CD4-positive, alpha-beta memory T cell (primary cell): ENCODE measurements at regions of chr6 and their contacts with region 1.

Region 1: GRCh38 chr6:79078075-79079025 is at the start of gene PHIP:
- DNase-seq: peak; percentile 95 to 97 (median 97)
- H3K4me3 ChIP-seq: peak within 1 kb of the TSS; percentile 86 to 89
- H3K4me3 Mint-ChIP-seq: peak within 1 kb of the TSS; percentile 90 to 98 (median 96)
- H3K27ac ChIP-seq: peak within 1 kb of the TSS; percentile 80
- H3K27ac Mint-ChIP-seq: peak within 1 kb of the TSS; percentile 94 to 99 (median 95)
- H3K4me1 ChIP-seq: peaks cover 39% of the 10 kb centered on the region
- H3K4me1 Mint-ChIP-seq: peaks cover 25 to 58% (median 33%) of the 10 kb centered on the region in 4 donors
- H3K27me3 ChIP-seq: no peaks in the 10 kb centered on the region
- H3K27me3 Mint-ChIP-seq: peaks cover 4 to 9% of the 10 kb centered on the region in 2 donors
- total RNA-seq, gene PHIP: 45.2 to 46.8 TPM

Region 2: DNA sequence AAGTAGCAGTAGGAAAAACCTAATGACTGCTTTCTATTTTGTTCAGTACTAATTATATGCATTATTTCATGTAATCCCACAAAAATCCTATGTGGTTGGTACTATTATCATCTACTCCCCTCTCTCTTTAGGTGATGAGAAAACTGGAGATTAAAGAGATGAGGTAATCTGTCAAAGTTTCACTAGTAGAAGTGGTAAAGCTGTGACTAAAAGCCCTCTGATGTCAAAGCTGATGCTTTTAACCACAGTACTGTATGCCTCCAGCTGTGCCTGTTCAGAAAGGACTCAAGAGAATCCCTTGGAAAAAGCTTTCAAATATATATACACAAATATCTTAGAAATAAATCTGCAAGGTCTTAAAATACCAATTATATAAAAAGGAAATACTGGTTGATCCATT is 38.3 kb before region 1 on chr6:
- CTCF ChIA-PET with region 1: interaction called, 6 read pairs
- POLR2A ChIA-PET with region 1: interaction called, 30 read pairs
- intact Hi-C with region 1: loop called (anchors 5 kb)
- DNase-seq: no peak
- H3K4me3 ChIP-seq: no peak overlapping the region
- H3K4me3 Mint-ChIP-seq: no peak overlapping the region
- H3K27ac ChIP-seq: no peak overlapping the region
- H3K27ac Mint-ChIP-seq: no peak overlapping the region
- H3K4me1 ChIP-seq: peaks cover 33% of the 10 kb centered on the region
- H3K4me1 Mint-ChIP-seq: peaks cover 38 to 69% (median 55%) of the 10 kb centered on the region in 4 donors
- H3K27me3 ChIP-seq: no peaks in the 10 kb centered on the region
- H3K27me3 Mint-ChIP-seq: no peaks in the 10 kb centered on the region

Region 3: DNA sequence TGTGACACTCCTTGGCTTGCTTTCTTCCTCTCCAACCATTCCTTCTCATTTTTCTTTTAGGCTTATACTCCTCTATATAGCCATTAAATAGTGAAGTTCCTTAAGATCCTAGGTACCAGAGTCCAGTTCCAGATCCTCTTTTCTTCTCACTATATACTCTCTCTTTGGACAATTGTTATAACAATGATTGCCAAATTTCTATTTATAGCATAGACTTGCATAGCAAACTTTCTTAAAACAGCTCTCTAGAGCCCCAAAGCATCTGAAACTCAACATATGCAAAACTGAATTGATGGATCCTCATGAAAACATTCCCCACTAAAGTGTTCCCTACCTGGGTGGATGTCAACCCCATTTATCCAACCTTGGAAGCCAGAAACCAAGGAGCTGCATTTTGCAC is 13.7 kb before region 1 on chr6:
- CTCF ChIA-PET with region 1: interaction called, 3 read pairs
- POLR2A ChIA-PET with region 1: interaction called, 48 read pairs
- intact Hi-C with region 1: loop called (anchors 1 kb)
- DNase-seq: no peak
- H3K4me3 ChIP-seq: no peak overlapping the region
- H3K4me3 Mint-ChIP-seq: no peak overlapping the region
- H3K27ac ChIP-seq: no peak overlapping the region
- H3K27ac Mint-ChIP-seq: no peak overlapping the region
- H3K4me1 ChIP-seq: peaks cover 19% of the 10 kb centered on the region
- H3K4me1 Mint-ChIP-seq: peaks cover 10 to 21% (median 18%) of the 10 kb centered on the region in 4 donors
- H3K27me3 ChIP-seq: no peaks in the 10 kb centered on the region
- H3K27me3 Mint-ChIP-seq: no peaks in the 10 kb centered on the region

Region 4: GRCh38 chr6:79536954-79537747 is 458.8 kb after region 1 on chr6 and contains the start of gene LCA5:
- CTCF ChIA-PET with region 1: no interaction called
- POLR2A ChIA-PET with region 1: interaction called, 5 read pairs
- intact Hi-C with region 1: loop called (anchors 1 kb)
- DNase-seq: peak; percentile 73 to 85 (median 84)
- H3K4me3 ChIP-seq: peak within 1 kb of the TSS; percentile 25 to 44
- H3K4me3 Mint-ChIP-seq: no peak within 1 kb of the TSS
- H3K27ac ChIP-seq: no peak within 1 kb of the TSS
- H3K27ac Mint-ChIP-seq: no peak within 1 kb of the TSS
- H3K4me1 ChIP-seq: peaks cover 14% of the 10 kb centered on the region
- H3K4me1 Mint-ChIP-seq: peaks cover 0 to 4% (median under 1%) of the 10 kb centered on the region in 4 donors
- H3K27me3 ChIP-seq: no peaks in the 10 kb centered on the region
- H3K27me3 Mint-ChIP-seq: peaks cover 11 to 18% of the 10 kb centered on the region in 2 donors
- total RNA-seq, gene LCA5: 0.22 to 0.23 TPM

Region 5: DNA sequence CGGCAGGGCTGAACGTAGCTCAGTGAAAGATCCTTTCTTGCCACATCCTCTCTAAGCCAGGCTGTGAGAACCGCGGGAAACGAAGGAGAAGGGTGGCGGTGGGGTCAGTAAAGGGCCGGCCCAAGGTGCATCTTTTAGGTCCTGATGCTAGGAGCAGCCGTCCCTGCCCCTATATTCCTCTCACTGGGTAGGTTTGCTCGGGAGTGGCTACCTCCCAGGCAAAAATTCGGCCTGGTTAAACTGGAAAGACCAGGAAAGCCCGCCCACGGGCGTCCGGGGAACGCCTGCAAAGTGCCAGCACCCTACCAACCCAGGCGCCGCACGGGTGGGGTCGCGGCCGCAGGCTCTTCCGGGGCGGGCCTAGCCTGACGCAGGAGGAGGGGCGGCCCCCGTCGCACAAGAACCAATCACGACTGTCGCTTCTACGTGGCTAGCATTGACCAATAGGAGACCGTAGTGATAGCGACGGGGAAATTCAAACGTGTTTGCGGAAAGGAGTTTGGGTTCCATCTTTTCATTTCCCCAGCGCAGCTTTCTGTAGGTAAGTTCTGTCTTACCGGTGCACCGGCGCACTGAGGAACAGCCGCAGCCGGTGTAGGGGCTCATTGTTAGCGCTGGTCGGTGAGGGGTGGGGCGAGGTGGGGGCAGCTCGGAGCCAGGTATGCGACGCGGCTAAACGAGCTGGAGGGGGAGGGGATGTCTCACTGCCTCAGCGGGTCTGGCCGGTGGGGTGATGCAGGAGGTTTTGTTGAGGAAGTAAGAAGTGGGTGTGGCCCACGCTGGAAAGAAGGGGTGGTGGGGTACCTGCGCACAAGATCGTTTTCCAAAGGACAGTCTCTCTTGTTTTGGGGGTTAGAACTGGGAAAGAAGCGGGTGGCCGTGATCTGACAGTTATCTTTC is 926.1 kb after region 1 on chr6 and contains the start of gene TTK:
- CTCF ChIA-PET with region 1: no interaction called
- POLR2A ChIA-PET with region 1: interaction called, 9 read pairs
- intact Hi-C with region 1: loop called (anchors 2 kb)
- DNase-seq: peak; percentile 93 to 96 (median 94)
- H3K4me3 ChIP-seq: peak within 1 kb of the TSS; percentile 42 to 95
- H3K4me3 Mint-ChIP-seq: peak within 1 kb of the TSS; percentile 88 to 97 (median 94)
- H3K27ac ChIP-seq: peak within 1 kb of the TSS; percentile 81
- H3K27ac Mint-ChIP-seq: peak within 1 kb of the TSS; percentile 89 to 99 (median 98)
- H3K4me1 ChIP-seq: peaks cover 25% of the 10 kb centered on the region
- H3K4me1 Mint-ChIP-seq: peaks cover 15 to 25% (median 20%) of the 10 kb centered on the region in 4 donors
- H3K27me3 ChIP-seq: no peaks in the 10 kb centered on the region
- H3K27me3 Mint-ChIP-seq: peaks cover 2 to 3% of the 10 kb centered on the region in 2 donors
- total RNA-seq, gene TTK: 0.61 to 0.87 TPM